Activated CD8-positive, alpha-beta T cell treated with anti-CD3 and anti-CD28 coated beads for 36 hours (primary cell): ENCODE measurements at regions of chr2 and their contacts with region 1.

Region 1: DNA sequence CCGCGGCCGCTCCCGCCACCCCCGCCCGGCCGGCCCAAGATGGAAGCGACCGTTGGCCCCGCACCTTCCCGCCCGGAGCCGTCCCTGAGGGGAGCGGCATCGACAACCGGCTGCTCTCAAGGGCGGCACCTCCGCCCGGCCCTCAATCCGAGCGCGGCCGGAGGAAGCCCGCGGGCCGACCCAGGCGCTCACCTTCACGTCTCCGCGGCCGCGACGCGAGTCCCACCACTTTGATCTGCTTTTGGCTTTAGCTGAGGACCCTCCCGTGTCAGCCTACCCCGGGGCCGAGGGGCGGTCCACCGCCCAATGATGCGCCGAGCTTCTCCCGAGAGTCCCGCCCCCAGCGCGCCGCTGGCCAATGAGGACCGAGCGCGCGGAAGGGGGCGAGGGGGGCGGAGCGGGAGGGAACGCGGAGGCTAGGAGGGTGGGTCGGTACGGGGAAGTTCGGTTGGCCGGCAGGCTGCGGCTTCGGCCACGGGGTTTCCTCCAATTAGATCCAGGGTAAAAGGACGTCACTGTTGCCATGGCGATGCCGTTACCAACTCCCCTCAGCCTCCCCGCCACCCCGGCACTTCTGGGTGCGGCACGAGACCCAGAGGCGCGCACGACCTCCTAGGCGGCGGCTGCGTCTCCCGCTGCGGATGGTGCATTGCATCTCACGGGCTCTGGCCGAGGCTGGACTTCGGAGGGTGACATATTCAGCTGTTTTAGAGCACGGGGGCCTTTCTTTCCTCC is at the start of gene YWHAQ:
- DNase-seq: peak; percentile 99
- ATAC-seq: peak; percentile 93
- H3K4me3 Mint-ChIP-seq: peak within 1 kb of the TSS; percentile 99
- H3K27ac Mint-ChIP-seq: peak within 1 kb of the TSS; percentile 93
- H3K4me1 Mint-ChIP-seq: peaks cover 43% of the 10 kb centered on the region
- H3K27me3 Mint-ChIP-seq: peaks cover 2% of the 10 kb centered on the region
- CTCF ChIP-seq: no peak
- total RNA-seq, gene YWHAQ: 341 to 368 TPM

Region 2: GRCh38 chr2:9555297-9556141 is 75.4 kb before region 1 on chr2 and contains the start of gene ADAM17:
- CTCF ChIA-PET with region 1: interaction called, 10 read pairs
- POLR2A ChIA-PET with region 1: interaction called, 13 read pairs
- intact Hi-C with region 1: loop called (anchors 5 kb)
- DNase-seq: peak; percentile 88
- ATAC-seq: peak; percentile 90
- H3K4me3 Mint-ChIP-seq: peak within 1 kb of the TSS; percentile 87
- H3K27ac Mint-ChIP-seq: peak within 1 kb of the TSS; percentile 96
- H3K4me1 Mint-ChIP-seq: peaks cover 47% of the 10 kb centered on the region
- H3K27me3 Mint-ChIP-seq: no peaks in the 10 kb centered on the region
- CTCF ChIP-seq: no peak
- total RNA-seq, gene ADAM17: 14.2 to 15.9 TPM

Region 3: DNA sequence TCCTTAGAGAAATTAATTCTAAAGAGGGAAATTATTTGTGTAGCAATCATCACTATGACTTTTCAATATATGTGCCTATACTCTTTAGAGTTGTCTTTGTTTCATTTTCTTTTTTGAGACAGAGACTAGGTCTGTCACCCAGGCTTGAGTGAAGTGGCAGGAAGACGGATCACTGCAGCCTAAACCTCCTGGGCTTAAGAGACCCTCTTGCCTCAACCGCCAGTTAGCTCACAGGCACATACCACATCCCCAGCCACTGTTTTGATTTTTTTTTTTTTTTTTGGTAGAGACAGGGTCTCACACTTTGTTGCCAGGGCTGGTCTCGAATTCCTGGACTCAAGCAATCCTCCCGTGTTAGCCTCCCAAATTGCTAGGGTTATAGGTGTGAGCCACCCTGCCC is 12.5 kb before region 1 on chr2:
- CTCF ChIA-PET with region 1: interaction called, 5 read pairs
- POLR2A ChIA-PET with region 1: interaction called, 61 read pairs
- intact Hi-C with region 1: no loop called
- DNase-seq: peak; percentile 61
- ATAC-seq: peak; percentile 98
- H3K4me3 Mint-ChIP-seq: peak overlapping the region; percentile 70
- H3K27ac Mint-ChIP-seq: peak overlapping the region; percentile 93
- H3K4me1 Mint-ChIP-seq: peaks cover 92% of the 10 kb centered on the region
- H3K27me3 Mint-ChIP-seq: no peaks in the 10 kb centered on the region
- CTCF ChIP-seq: no peak

Region 4: DNA sequence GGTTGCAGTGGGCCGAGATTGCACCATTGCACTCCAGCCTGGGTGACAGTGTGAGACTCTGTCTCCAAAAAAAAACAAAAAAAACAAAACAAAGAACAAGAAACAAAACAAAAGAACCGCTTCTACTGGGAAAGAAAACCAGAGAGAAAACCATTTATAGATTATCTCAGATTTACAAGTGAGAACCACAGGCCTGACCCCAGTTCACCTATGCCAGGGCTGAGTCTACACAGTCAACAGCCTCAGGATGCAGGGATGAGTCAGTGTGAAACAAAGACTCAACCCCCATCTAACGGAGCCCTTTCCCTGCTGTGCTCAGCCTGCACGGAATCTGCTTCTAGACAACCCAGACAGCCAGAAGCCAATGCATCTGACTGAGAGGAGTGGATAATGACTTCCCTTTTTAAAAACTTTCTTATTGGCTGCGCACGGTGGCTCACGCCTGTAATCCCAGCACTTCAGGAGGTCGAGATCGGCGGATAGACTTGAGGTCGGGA is 25.4 kb after region 1 on chr2:
- CTCF ChIA-PET with region 1: interaction called, 3 read pairs
- POLR2A ChIA-PET with region 1: interaction called, 23 read pairs
- intact Hi-C with region 1: no loop called
- DNase-seq: peak; percentile 87
- ATAC-seq: peak; percentile 81
- H3K4me3 Mint-ChIP-seq: no peak overlapping the region
- H3K27ac Mint-ChIP-seq: peak overlapping the region; percentile 85
- H3K4me1 Mint-ChIP-seq: peaks cover 26% of the 10 kb centered on the region
- H3K27me3 Mint-ChIP-seq: no peaks in the 10 kb centered on the region
- CTCF ChIP-seq: no peak

Region 5: DNA sequence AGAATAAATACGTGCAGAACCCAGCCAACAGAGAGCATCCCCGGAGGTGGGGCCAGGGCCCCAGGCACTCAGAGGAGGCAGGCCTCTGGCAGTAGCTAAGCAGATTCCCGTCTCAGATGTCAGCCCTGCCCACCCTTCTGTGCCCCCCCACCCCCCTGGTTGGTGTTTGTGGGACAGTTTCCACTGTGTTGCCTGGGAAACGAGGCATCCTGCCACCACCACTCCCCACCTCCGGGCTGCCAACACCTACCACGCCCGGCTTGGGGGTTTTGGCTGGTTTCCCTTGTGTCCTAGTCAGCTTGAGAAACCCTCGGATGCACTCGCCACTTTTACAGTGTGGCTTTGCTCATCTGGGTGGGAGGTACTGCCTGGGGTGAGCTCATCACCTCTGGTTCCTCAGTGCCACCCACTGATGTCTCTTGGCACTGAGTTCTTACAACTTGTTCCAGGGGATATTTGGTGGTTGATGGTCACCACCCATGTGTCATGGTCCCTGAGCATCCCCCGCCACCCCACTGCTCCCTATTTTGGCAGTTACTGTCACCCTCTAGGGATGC is 72.2 kb after region 1 on chr2:
- CTCF ChIA-PET with region 1: interaction called, 4 read pairs
- POLR2A ChIA-PET with region 1: interaction called, 14 read pairs
- intact Hi-C with region 1: no loop called
- DNase-seq: peak; percentile 96
- ATAC-seq: peak; percentile 94
- H3K4me3 Mint-ChIP-seq: no peak overlapping the region
- H3K27ac Mint-ChIP-seq: peak overlapping the region; percentile 7
- H3K4me1 Mint-ChIP-seq: peaks cover 30% of the 10 kb centered on the region
- H3K27me3 Mint-ChIP-seq: peaks cover 2% of the 10 kb centered on the region
- CTCF ChIP-seq: no peak

Region 6: DNA sequence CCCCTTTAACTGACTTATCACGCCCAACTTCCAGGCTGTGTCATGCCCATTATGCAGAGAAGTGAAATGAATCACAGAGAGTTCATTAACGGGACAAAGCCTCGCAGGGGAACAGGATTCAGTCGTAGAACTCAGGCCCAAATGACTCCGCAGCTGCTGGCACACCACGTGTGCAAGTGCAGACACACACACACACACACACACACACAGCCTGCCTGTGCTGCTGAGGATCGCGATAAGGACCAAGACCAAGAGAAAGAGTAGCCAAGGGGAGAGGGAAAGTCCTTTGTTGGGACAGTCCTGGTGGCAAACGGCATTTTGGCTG is 122.3 kb after region 1 on chr2:
- CTCF ChIA-PET with region 1: interaction called, 3 read pairs
- POLR2A ChIA-PET with region 1: interaction called, 14 read pairs
- intact Hi-C with region 1: no loop called
- DNase-seq: peak; percentile 82
- ATAC-seq: peak; percentile 82
- H3K4me3 Mint-ChIP-seq: peak overlapping the region; percentile 32
- H3K27ac Mint-ChIP-seq: peak overlapping the region; percentile 81
- H3K4me1 Mint-ChIP-seq: peaks cover 54% of the 10 kb centered on the region
- H3K27me3 Mint-ChIP-seq: peaks cover 28% of the 10 kb centered on the region
- CTCF ChIP-seq: no peak